ENCODE measurements at regions of chr9 and their contacts with region 1.

Region 1: GRCh38 chr9:104991144-104991953 is 63.4 kb upstream of the ABCA1 start:
- DNase-seq: peak; percentile 87 to 95
- ATAC-seq: peak; percentile 78 to 81
- H3K4me3 ChIP-seq: peak overlapping the region; percentile 56 to 69 (median 66)
- H3K27ac ChIP-seq: peak overlapping the region; percentile 87 to 91 (median 90)
- H3K4me1 ChIP-seq: peaks cover 32 to 38% of the 10 kb centered on the region in 2 donors
- H3K27me3 ChIP-seq: no peaks in the 10 kb centered on the region
- CTCF ChIP-seq: no peak
- POLR2A ChIP-seq: peak in 1 of 2 donors; percentile 61

Region 2: GRCh38 chr9:104863180-104863883 is 128.0 kb before region 1 on chr9:
- in situ Hi-C with region 1: loop called in 3 of 4 experiments (anchors 10 to 25 kb)
- intact Hi-C with region 1: loop called (anchors 5 kb)
- DNase-seq: peak in 1 of 2 donors; percentile 57
- ATAC-seq: peak; percentile 73 to 79
- H3K4me3 ChIP-seq: no peak overlapping the region
- H3K27ac ChIP-seq: peak overlapping the region; percentile 46 to 90 (median 62)
- H3K4me1 ChIP-seq: peaks cover 24 to 35% of the 10 kb centered on the region in 2 donors
- H3K27me3 ChIP-seq: no peaks in the 10 kb centered on the region
- CTCF ChIP-seq: peak; percentile 56 to 78 (median 74)
- POLR2A ChIP-seq: no peak

Region 3: GRCh38 chr9:104927912-104928740 is 63.2 kb before region 1 on chr9 and contains the start of gene ABCA1:
- in situ Hi-C with region 1: no loop called
- intact Hi-C with region 1: loop called (anchors 1 kb)
- DNase-seq: peak; percentile 94 to 96
- ATAC-seq: peak; percentile 85
- H3K4me3 ChIP-seq: peak within 1 kb of the TSS; percentile 68 to 94 (median 88)
- H3K27ac ChIP-seq: peak within 1 kb of the TSS; percentile 89 to 98 (median 96)
- H3K4me1 ChIP-seq: peaks cover 30 to 31% of the 10 kb centered on the region in 2 donors
- H3K27me3 ChIP-seq: no peaks in the 10 kb centered on the region
- CTCF ChIP-seq: no peak
- POLR2A ChIP-seq: peak; percentile 51 to 96
- total RNA-seq, gene ABCA1: 4.9 to 23.8 (median 21.5) TPM

Region 4: GRCh38 chr9:105064315-105065097 is 73.2 kb after region 1 on chr9:
- in situ Hi-C with region 1: no loop called
- intact Hi-C with region 1: loop called (anchors 1 kb)
- DNase-seq: peak; percentile 94 to 98
- ATAC-seq: peak; percentile 95
- H3K4me3 ChIP-seq: peak overlapping the region in 3 of 4 donors; percentile 17 to 33 (median 17)
- H3K27ac ChIP-seq: peak overlapping the region; percentile 84 to 92 (median 87)
- H3K4me1 ChIP-seq: peaks cover 21 to 24% of the 10 kb centered on the region in 2 donors
- H3K27me3 ChIP-seq: no peaks in the 10 kb centered on the region
- CTCF ChIP-seq: peak in 2 of 5 experiments; percentile 14 to 22
- POLR2A ChIP-seq: peak; percentile 47 to 74

Region 5: DNA sequence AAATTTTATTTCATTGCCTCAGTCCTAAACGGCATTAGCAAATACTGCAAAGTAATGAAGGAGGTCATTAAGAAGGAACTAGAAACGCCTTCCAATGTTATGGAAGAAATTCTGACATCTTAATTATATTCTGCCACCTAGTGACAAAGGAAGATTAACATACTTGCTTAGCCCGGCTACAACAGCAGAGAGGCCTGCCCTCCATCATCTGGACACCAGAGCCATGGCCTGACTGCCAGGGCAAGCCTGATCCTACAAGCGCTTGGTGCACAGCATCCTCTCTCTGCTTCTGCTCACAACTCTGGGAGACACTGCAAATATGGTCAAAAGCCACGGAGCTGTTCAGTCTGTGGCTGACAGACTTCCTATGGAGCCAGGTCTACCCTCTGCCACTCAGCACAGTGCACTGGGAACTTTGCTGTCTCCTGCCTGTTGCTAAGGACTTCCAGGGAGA is 165.8 kb after region 1 on chr9:
- in situ Hi-C with region 1: no loop called
- intact Hi-C with region 1: loop called (anchors 5 kb)
- DNase-seq: peak; percentile 14 to 57
- ATAC-seq: peak; percentile 96 to 98
- H3K4me3 ChIP-seq: no peak overlapping the region
- H3K27ac ChIP-seq: no peak overlapping the region
- H3K4me1 ChIP-seq: peaks cover 3 to 5% of the 10 kb centered on the region in 2 donors
- H3K27me3 ChIP-seq: no peaks in the 10 kb centered on the region
- CTCF ChIP-seq: peak in 4 of 5 experiments; percentile 38 to 60 (median 58)
- POLR2A ChIP-seq: no peak